ENCODE measurements at regions of chr1 and their contacts with region 1.

Region 1: GRCh38 chr1:244864253-244865027 is at the start of gene HNRNPU:
- DNase-seq: peak; percentile 99
- H3K4me3 ChIP-seq: peak within 1 kb of the TSS; percentile 84
- H3K27ac ChIP-seq: peak within 1 kb of the TSS; percentile 86
- H3K4me1 ChIP-seq: peaks cover 45% of the 10 kb centered on the region
- CTCF ChIP-seq: peak; percentile 50
- total RNA-seq, gene HNRNPU: 426 and 592 TPM in 2 replicates

Region 2: GRCh38 chr1:244835276-244836134 is 28.9 kb before region 1 on chr1 and contains the start of gene COX20:
- CTCF ChIA-PET with region 1: interaction called, 8 read pairs
- POLR2A ChIA-PET with region 1: interaction called, 83 read pairs
- intact Hi-C with region 1: loop called (anchors 1 kb)
- DNase-seq: peak; percentile 94
- H3K4me3 ChIP-seq: peak within 1 kb of the TSS; percentile 88
- H3K27ac ChIP-seq: peak within 1 kb of the TSS; percentile 94
- H3K4me1 ChIP-seq: peaks cover 78% of the 10 kb centered on the region
- CTCF ChIP-seq: no peak
- total RNA-seq, gene COX20: 12.7 and 12.9 TPM in 2 replicates

Region 3: GRCh38 chr1:244851546-244852231 is 12.8 kb before region 1 on chr1:
- CTCF ChIA-PET with region 1: interaction called, 3 read pairs
- POLR2A ChIA-PET with region 1: interaction called, 40 read pairs
- intact Hi-C with region 1: no loop called
- DNase-seq: no peak
- H3K4me3 ChIP-seq: no peak overlapping the region
- H3K27ac ChIP-seq: no peak overlapping the region
- H3K4me1 ChIP-seq: peaks cover 9% of the 10 kb centered on the region
- CTCF ChIP-seq: no peak

Region 4: GRCh38 chr1:244896550-244896949 is 32.1 kb after region 1 on chr1:
- CTCF ChIA-PET with region 1: no interaction called
- POLR2A ChIA-PET with region 1: interaction called, 13 read pairs
- intact Hi-C with region 1: no loop called
- DNase-seq: no peak
- H3K4me3 ChIP-seq: no peak overlapping the region
- H3K27ac ChIP-seq: no peak overlapping the region
- H3K4me1 ChIP-seq: peaks cover 9% of the 10 kb centered on the region
- CTCF ChIP-seq: no peak

Region 5: GRCh38 chr1:244945109-244945671 is 80.8 kb after region 1 on chr1:
- CTCF ChIA-PET with region 1: no interaction called
- POLR2A ChIA-PET with region 1: interaction called, 7 read pairs
- intact Hi-C with region 1: loop called (anchors 2 kb)
- DNase-seq: peak; percentile 37
- H3K4me3 ChIP-seq: no peak overlapping the region
- H3K27ac ChIP-seq: peak overlapping the region; percentile 39
- H3K4me1 ChIP-seq: peaks cover 22% of the 10 kb centered on the region
- CTCF ChIP-seq: no peak

Region 6: DNA sequence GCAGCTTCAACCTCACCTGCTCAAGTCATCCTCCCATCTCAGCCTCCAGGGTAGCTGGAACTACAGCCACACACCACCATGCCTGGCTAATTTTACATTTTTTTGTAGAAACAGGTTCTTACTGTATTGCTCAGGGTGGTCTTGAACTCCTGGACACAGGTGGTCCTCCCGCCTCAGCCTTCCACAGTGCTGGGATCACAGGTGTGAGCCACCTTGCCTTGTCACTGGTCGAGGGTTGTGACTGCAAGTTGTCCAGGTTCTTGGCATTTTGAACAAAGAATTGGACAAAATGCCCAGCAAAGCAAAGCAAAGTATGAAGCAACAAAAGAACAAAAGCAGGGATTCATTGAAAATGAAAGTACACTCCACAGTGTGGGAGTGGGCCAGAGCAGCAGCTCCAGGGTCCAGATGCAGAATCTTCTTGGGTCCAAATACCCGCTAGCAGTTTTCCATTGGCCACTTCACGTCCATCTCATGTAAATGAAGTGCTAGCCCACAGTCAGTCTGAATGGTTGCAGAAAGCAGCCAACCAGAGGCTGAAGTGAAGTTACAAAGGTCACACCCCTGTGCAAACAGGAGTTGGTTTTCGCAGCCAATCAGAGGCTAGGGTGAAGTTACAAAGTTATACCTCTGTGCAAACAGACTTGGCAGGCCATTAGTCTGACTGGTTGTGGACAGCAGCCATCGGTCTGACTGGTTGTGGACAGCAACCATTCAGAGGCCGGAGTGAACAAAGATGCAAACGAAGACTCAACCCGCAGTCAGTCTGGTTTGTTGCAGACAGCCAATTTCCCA is 180.8 kb after region 1 on chr1:
- CTCF ChIA-PET with region 1: interaction called, 5 read pairs
- POLR2A ChIA-PET with region 1: interaction called, 8 read pairs
- intact Hi-C with region 1: loop called (anchors 1 kb)
- DNase-seq: no peak
- H3K4me3 ChIP-seq: no peak overlapping the region
- H3K27ac ChIP-seq: no peak overlapping the region
- H3K4me1 ChIP-seq: peaks cover 8% of the 10 kb centered on the region
- CTCF ChIP-seq: no peak